Caco-2 (cell line): ENCODE measurements at regions of chr10 and their contacts with region 1.

Region 1: DNA sequence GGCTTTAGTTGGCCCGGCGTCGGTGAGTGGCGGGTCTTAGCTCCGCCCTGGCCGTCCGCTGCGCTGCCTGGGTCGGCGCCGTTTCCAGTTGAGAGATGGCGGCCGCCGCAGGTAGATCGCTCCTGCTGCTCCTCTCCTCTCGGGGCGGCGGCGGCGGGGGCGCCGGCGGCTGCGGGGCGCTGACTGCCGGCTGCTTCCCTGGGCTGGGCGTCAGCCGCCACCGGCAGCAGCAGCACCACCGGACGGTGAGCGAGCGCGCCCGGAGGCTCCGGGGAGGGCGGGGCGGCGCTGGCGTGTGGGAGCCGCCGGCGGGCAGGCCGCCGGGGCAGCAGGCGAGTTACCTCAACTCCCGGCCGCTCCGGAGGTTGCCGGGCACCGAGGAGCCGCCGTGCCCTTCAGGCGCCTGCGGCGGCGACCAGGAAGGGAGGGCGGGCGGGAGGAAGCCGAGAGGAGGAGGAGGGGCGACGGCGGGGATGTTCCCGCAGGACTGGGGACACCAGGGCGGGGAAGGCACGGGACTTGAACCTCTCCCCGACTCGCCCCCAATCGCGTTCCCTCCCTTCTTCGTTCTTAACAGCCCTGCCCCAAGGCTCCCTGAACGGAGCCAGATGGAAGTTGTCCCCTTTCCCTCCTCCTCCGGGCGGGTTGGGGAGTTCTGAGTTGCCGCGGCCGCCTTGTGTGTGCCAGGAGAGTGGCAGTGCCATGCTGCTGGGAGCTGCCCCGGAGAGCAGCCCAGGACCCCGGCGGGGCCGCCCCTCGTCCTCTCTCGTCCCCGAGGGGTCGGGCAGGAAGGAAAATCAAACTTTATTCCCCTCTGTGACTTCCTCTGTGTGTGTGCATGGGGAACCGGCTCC is at the start of gene MCU:
- DNase-seq: peak; percentile 57 to 98
- H3K4me3 ChIP-seq: peak within 1 kb of the TSS; percentile 80
- H3K4me3 Mint-ChIP-seq: peak within 1 kb of the TSS; percentile 84
- H3K27ac Mint-ChIP-seq: peak within 1 kb of the TSS; percentile 42
- H3K4me1 ChIP-seq: peaks cover 45% of the 10 kb centered on the region
- H3K4me1 Mint-ChIP-seq: peaks cover 52% of the 10 kb centered on the region
- H3K27me3 ChIP-seq: no peaks in the 10 kb centered on the region
- H3K27me3 Mint-ChIP-seq: no peaks in the 10 kb centered on the region
- CTCF ChIP-seq: no peak
- total RNA-seq, gene MCU: 52.2 and 62.5 TPM in 2 replicates

Region 2: DNA sequence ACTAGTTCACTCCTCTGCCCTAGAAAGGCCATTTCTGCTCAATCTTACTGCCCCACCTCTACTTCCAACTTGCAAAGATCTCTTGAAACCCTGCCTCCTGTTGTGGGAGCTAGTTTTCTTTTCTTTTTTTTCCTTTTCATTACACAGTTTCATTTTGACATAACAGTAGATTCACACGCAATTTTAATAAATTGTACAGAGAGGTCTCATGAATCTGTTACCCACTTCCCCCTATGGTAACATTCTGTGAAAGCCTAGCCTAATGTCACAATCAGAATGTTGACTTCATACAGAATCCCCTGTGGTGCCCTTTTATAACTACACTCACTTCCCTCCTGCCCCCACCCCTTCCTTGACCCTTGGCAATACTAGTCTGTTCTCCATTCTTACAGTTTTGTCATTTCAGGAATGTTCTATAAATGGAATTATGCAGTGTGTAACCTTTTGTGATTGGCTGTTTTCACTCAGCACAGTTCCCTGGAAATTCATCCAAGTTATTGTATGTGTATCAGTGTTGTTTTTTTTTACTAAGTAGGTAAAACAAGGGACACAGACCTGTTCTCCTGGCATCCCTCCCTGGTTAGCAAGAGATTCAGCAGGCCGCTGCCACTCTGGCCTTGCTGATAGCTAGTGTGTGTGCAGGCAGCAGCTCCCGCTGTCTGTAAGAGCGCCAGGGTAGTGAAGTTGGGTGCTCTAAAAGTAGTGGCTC is 706.6 kb before region 1 on chr10:
- CTCF ChIA-PET with region 1: no interaction called
- POLR2A ChIA-PET with region 1: no interaction called
- intact Hi-C with region 1: no loop called
- DNase-seq: no peak
- H3K4me3 ChIP-seq: no peak overlapping the region
- H3K4me3 Mint-ChIP-seq: no peak overlapping the region
- H3K27ac Mint-ChIP-seq: peak overlapping the region; percentile 5
- H3K4me1 ChIP-seq: peaks cover 2% of the 10 kb centered on the region; the same call in 1 of the 2 replicates
- H3K4me1 Mint-ChIP-seq: peaks cover 9% of the 10 kb centered on the region
- H3K27me3 ChIP-seq: no peaks in the 10 kb centered on the region
- H3K27me3 Mint-ChIP-seq: no peaks in the 10 kb centered on the region
- CTCF ChIP-seq: no peak

Region 3: GRCh38 chr10:72364239-72364777 is 328.0 kb before region 1 on chr10:
- CTCF ChIA-PET with region 1: interaction called, 5 read pairs
- POLR2A ChIA-PET with region 1: interaction called, 7 read pairs
- intact Hi-C with region 1: loop called (anchors 5 kb)
- DNase-seq: peak; percentile 90 to 92
- H3K4me3 ChIP-seq: no peak overlapping the region
- H3K4me3 Mint-ChIP-seq: peak overlapping the region; percentile 23
- H3K27ac Mint-ChIP-seq: peak overlapping the region; percentile 75
- H3K4me1 ChIP-seq: peaks cover 17% of the 10 kb centered on the region
- H3K4me1 Mint-ChIP-seq: peaks cover 9% of the 10 kb centered on the region
- H3K27me3 ChIP-seq: no peaks in the 10 kb centered on the region
- H3K27me3 Mint-ChIP-seq: no peaks in the 10 kb centered on the region
- CTCF ChIP-seq: peak; percentile 98 to 99

Region 4: DNA sequence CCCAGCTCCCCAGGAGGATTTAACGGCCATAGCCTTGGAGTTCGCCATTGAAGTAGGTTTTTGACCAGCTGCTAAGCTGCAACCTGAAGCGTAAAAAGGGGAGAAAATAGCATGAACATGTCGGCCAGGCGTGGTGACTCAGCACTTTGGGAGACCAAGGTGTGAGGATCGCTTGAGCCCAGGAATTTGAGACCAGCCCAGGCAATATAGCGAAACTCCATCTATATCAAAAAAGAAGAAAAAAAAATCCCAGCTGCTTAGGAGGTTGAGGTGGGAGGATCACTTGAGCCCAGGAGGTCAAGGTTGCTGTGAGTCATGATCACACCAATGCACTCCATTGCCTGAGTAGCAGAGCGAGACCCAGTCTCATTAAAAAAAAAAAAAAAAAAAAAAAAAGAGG is 32.6 kb before region 1 on chr10:
- CTCF ChIA-PET with region 1: no interaction called
- POLR2A ChIA-PET with region 1: interaction called, 10 read pairs
- intact Hi-C with region 1: no loop called
- DNase-seq: no peak
- H3K4me3 ChIP-seq: no peak overlapping the region
- H3K4me3 Mint-ChIP-seq: no peak overlapping the region
- H3K27ac Mint-ChIP-seq: no peak overlapping the region
- H3K4me1 ChIP-seq: peaks cover 7% of the 10 kb centered on the region; the same call in 1 of the 2 replicates
- H3K4me1 Mint-ChIP-seq: peaks cover 7% of the 10 kb centered on the region
- H3K27me3 ChIP-seq: no peaks in the 10 kb centered on the region
- H3K27me3 Mint-ChIP-seq: no peaks in the 10 kb centered on the region
- CTCF ChIP-seq: no peak

Region 5: GRCh38 chr10:72729528-72729927 is 37.2 kb after region 1 on chr10:
- CTCF ChIA-PET with region 1: no interaction called
- POLR2A ChIA-PET with region 1: no interaction called
- intact Hi-C with region 1: no loop called
- DNase-seq: no peak
- H3K4me3 ChIP-seq: no peak overlapping the region
- H3K4me3 Mint-ChIP-seq: no peak overlapping the region
- H3K27ac Mint-ChIP-seq: no peak overlapping the region
- H3K4me1 ChIP-seq: no peaks in the 10 kb centered on the region; the same call in 1 of the 2 replicates
- H3K4me1 Mint-ChIP-seq: peaks cover 10% of the 10 kb centered on the region
- H3K27me3 ChIP-seq: no peaks in the 10 kb centered on the region
- H3K27me3 Mint-ChIP-seq: no peaks in the 10 kb centered on the region
- CTCF ChIP-seq: no peak

Region 6: GRCh38 chr10:72834183-72834825 is 142.0 kb after region 1 on chr10:
- CTCF ChIA-PET with region 1: interaction called, 8 read pairs
- POLR2A ChIA-PET with region 1: interaction called, 5 read pairs
- intact Hi-C with region 1: loop called (anchors 1 kb)
- DNase-seq: peak; percentile 53 to 72
- H3K4me3 ChIP-seq: no peak overlapping the region
- H3K4me3 Mint-ChIP-seq: no peak overlapping the region
- H3K27ac Mint-ChIP-seq: no peak overlapping the region
- H3K4me1 ChIP-seq: no peaks in the 10 kb centered on the region
- H3K4me1 Mint-ChIP-seq: peaks cover 13% of the 10 kb centered on the region
- H3K27me3 ChIP-seq: no peaks in the 10 kb centered on the region
- H3K27me3 Mint-ChIP-seq: no peaks in the 10 kb centered on the region
- CTCF ChIP-seq: peak; percentile 73 to 81

Region 7: DNA sequence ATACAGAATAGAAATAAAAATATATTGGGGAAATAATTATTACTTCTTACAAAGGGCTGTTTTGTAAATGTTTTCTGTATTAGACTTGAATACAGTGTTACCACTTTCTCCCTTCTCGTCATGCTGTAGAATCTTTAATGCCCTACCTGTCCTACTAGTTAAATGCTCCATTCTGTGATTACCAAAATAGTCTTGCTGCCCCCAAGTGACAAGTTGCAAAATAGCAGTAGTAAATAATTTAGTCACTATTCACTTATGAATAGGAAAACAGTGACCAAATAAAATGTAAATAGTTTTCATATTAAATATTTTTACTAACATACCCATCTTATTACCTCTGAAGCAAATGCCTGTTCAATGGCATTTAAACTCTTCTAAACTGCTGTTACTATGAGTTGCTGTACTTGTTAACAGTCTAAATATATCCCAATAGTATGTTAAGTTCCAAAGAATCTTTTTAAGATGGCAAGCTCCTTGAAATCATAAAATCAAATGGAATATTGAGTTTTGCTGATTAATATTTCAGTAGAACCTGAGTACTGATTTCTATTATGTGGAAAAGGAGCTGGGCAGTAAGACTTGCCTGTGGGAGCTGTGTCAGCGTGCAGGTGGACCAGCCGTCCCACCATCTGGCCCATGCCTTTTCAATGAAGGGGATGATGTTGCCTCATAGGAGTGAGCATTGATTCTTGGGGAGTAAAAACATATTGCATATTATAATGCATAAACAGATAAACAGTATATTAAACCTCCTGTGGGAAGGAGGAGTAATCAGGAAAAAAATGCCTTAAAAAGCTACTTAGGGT is 183.2 kb after region 1 on chr10:
- CTCF ChIA-PET with region 1: no interaction called
- POLR2A ChIA-PET with region 1: no interaction called
- intact Hi-C with region 1: loop called (anchors 2 kb)
- DNase-seq: peak in 1 of 2 experiments; percentile 56
- H3K4me3 ChIP-seq: no peak overlapping the region
- H3K4me3 Mint-ChIP-seq: no peak overlapping the region
- H3K27ac Mint-ChIP-seq: no peak overlapping the region
- H3K4me1 ChIP-seq: no peaks in the 10 kb centered on the region
- H3K4me1 Mint-ChIP-seq: no peaks in the 10 kb centered on the region
- H3K27me3 ChIP-seq: no peaks in the 10 kb centered on the region
- H3K27me3 Mint-ChIP-seq: no peaks in the 10 kb centered on the region
- CTCF ChIP-seq: peak; percentile 67 to 69

Region 8: DNA sequence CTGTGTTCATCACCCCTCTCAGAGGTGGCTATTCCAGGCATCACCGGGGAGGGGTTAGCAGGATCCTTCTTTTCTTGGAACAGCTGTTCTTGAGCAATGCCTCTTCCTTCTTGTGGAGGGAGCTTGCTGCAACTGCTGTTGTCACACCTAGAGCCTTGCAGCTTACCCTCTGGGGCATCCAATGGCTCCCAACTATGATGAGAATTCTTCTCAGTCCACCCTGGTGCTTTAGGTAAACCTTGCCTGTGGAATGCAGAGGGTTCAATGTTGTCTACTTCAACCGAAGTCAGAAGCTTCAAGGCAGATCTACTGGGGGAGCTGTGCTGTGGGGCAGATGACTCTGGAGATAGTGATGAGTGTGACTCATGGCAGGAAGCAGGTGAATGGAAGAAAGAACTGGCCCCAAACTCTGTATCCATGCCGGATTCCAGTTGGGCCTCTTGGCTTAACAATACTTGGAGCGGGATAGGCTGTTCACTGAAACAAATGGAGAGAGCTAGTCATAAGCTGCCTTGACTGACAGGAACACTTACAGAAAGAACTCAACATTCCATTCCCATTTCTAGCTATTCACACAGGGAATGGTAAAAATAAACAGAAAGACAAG is 825.1 kb after region 1 on chr10:
- CTCF ChIA-PET with region 1: no interaction called
- POLR2A ChIA-PET with region 1: no interaction called
- intact Hi-C with region 1: no loop called
- DNase-seq: peak in 1 of 2 experiments; percentile 29
- H3K4me3 ChIP-seq: no peak overlapping the region
- H3K4me3 Mint-ChIP-seq: no peak overlapping the region
- H3K27ac Mint-ChIP-seq: peak overlapping the region; percentile 1
- H3K4me1 ChIP-seq: 0 out of 2 replicates have a peak, but pooled peaks cover 3% of the 10 kb centered on the region
- H3K4me1 Mint-ChIP-seq: peaks cover 8% of the 10 kb centered on the region
- H3K27me3 ChIP-seq: no peaks in the 10 kb centered on the region
- H3K27me3 Mint-ChIP-seq: no peaks in the 10 kb centered on the region
- CTCF ChIP-seq: no peak